ENCODE measurements at regions of chr15 and their contacts with region 1.

Region 1: DNA sequence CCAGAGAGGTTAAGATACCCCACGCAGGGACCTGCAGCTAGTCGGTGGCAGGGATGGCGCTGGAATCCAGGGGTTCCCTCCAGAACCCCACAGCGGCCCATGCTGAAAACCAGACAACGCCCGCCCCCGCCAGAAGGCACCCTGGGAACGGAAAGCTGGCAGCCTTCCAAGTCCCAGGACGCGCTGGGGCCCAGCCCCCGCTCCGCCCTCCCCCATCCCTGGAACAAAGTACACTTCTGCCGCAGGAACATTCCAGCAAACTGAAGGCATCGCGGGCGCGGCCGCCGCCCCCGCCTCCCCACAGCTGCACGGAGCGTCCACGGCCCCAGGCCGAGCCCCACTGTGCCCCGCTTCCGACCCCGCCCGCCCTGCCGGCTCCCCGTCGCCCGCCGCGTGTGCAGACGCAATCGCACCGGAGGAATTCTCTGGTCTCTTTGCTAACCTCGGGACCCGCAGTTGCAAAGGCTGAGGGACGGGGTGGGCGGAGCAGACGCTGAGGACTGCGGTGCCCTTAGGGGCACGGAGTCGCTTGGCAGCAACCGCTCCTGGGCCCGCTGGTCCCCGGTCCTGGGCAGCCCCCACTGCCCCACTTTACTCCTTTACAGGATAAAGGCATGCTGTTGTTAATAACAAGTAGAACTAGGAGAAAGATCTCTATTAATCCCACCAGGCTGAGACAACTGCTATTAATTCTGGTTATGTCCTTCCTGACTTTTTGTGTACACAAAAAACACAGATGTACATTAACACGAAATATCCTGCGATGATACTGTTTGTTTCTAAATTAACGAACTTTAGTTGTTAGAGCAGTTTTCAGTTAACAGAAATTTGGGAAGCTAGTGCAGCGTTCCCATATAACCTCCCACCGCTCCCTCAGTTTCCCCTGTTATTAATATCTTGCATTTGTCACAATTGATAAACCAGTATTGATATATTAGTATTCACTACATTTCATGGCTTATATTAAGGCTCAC is 45.0 kb upstream of the RNU6-1 start:
- DNase-seq: peak; percentile 93 to 95
- H3K4me3 ChIP-seq: peak overlapping the region; percentile 32
- H3K4me3 Mint-ChIP-seq: peak overlapping the region; percentile 60
- H3K27ac Mint-ChIP-seq: peak overlapping the region; percentile 36
- H3K4me1 ChIP-seq: peaks cover 33% of the 10 kb centered on the region
- H3K4me1 Mint-ChIP-seq: peaks cover 35% of the 10 kb centered on the region
- H3K27me3 ChIP-seq: no peaks in the 10 kb centered on the region
- H3K27me3 Mint-ChIP-seq: no peaks in the 10 kb centered on the region
- CTCF ChIP-seq: peak in 1 of 2 experiments; percentile 12

Region 2: DNA sequence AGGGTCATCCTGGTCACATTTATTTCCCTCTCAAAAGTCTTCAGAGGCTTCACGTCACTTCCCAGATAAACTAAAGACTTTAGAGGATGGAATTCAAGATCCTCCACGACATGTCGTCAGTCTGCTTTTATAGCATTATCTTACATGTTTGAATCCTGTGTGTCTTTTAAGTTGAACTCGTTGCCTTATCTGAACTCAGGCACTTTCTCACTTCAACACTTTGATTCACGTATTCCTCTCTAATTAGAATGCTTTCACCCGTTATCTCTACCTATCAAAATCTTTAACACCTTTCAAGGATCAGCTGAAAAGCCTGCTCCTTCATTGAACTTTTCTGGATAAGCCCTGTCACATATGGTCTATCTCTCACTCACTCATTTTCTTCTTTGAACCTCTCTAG is 245.2 kb before region 1 on chr15:
- CTCF ChIA-PET with region 1: no interaction called
- POLR2A ChIA-PET with region 1: no interaction called
- intact Hi-C with region 1: no loop called
- DNase-seq: no peak
- H3K4me3 ChIP-seq: no peak overlapping the region
- H3K4me3 Mint-ChIP-seq: no peak overlapping the region
- H3K27ac Mint-ChIP-seq: no peak overlapping the region
- H3K4me1 ChIP-seq: no peaks in the 10 kb centered on the region
- H3K4me1 Mint-ChIP-seq: no peaks in the 10 kb centered on the region
- H3K27me3 ChIP-seq: no peaks in the 10 kb centered on the region
- H3K27me3 Mint-ChIP-seq: no peaks in the 10 kb centered on the region
- CTCF ChIP-seq: no peak

Region 3: GRCh38 chr15:67955252-67955651 is 70.5 kb after region 1 on chr15:
- CTCF ChIA-PET with region 1: no interaction called
- POLR2A ChIA-PET with region 1: no interaction called
- intact Hi-C with region 1: loop called (anchors 2 kb)
- DNase-seq: no peak
- H3K4me3 ChIP-seq: no peak overlapping the region
- H3K4me3 Mint-ChIP-seq: no peak overlapping the region
- H3K27ac Mint-ChIP-seq: peak overlapping the region; percentile 28
- H3K4me1 ChIP-seq: peaks cover 13% of the 10 kb centered on the region
- H3K4me1 Mint-ChIP-seq: peaks cover 18% of the 10 kb centered on the region
- H3K27me3 ChIP-seq: no peaks in the 10 kb centered on the region
- H3K27me3 Mint-ChIP-seq: no peaks in the 10 kb centered on the region
- CTCF ChIP-seq: no peak